ENCODE measurements at regions of chr6 and their contacts with region 1.

Region 1: GRCh38 chr6:100001915-100002388 is 7.9 kb upstream of the MCHR2 start:
- DNase-seq: peak; percentile 52
- CTCF ChIP-seq: peak; percentile 95

Region 2: DNA sequence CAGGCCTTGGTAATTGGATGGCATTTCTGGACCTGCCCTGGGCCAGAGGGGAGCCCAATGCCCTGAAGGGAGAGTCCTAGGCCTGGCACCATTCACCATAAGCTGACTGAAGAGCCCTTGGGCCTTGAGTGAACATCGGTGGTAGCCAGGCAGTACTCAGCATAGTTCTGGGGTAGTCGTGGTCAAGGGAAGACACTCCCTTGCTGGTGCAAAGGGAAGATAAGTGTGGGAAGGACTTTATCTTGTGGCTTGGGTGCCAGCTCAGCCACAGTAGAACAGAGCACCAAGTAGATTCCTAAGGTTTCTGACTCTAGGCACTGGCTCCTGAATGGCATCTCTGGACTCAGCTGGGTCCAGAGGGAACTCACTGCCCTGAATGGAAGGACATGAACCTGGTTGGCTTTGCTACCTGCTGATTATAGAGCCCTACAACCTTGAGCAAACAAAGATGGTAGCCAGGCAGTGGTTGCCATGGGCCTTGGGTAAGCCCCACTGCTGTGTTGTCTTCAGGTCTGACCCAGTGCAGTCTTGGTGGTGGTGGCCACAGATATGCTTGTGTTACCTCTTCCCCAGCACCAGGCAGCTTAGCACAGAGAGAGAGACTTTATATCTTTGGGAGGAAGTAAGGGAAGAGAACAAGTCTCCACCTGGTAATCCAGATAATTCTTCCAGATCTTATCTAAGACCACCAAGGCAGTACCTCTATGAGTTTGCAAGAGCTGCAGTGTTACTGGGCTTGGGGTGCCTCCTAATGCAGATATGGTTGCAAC is 311.9 kb before region 1 on chr6:
- CTCF ChIA-PET with region 1: no interaction called
- POLR2A ChIA-PET with region 1: no interaction called
- DNase-seq: no peak
- CTCF ChIP-seq: no peak

Region 3: GRCh38 chr6:99979953-99980352 is 22.0 kb before region 1 on chr6:
- CTCF ChIA-PET with region 1: interaction called, 11 read pairs
- POLR2A ChIA-PET with region 1: no interaction called
- DNase-seq: no peak
- CTCF ChIP-seq: no peak

Region 4: DNA sequence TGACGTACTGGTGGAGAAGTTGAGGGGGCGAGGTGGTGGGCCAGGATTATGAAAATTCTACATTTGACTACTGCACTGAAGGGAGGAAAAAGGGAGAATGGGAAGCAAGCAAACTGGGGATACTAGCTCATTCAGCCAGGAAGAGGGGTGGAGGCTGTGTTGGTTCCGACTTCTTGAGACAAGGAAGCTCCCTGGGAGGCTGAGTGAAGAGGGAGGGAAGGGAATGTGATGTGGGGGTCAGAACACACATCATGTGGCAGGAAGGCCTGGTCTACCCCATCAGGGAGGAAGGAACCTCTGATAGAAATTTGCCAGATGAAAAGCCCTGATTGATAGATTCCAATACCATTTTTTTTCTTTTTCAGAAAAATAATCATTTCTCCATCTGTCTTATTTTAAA is 20.9 kb after region 1 on chr6:
- CTCF ChIA-PET with region 1: interaction called, 14 read pairs
- POLR2A ChIA-PET with region 1: no interaction called
- DNase-seq: no peak
- CTCF ChIP-seq: no peak

Region 5: GRCh38 chr6:100078509-100078908 is 76.6 kb after region 1 on chr6:
- CTCF ChIA-PET with region 1: interaction called, 13 read pairs
- POLR2A ChIA-PET with region 1: no interaction called
- DNase-seq: no peak
- CTCF ChIP-seq: no peak

Region 6: GRCh38 chr6:100099189-100100074 is 97.5 kb after region 1 on chr6:
- CTCF ChIA-PET with region 1: interaction called, 37 read pairs
- POLR2A ChIA-PET with region 1: no interaction called
- DNase-seq: peak; percentile 22
- CTCF ChIP-seq: peak; percentile 45

Region 7: DNA sequence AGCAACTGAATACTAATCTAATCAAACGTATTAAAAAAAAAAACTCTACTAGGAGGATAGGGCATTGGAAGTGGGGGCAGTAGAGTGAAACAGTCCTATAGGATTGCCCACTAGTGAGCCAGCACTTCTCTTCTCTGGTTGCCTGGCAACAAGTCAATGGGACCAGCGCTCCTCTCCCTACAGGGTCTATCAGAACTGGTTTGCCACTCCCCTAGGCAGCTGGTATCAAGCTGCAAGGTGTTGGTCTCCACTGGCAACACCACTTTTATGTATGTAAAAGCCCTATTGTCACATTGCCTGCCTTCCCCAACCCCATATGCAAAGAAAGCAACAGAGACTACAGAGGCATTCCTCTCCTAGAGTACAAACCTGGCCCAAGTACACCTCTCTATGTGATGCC is 159.0 kb after region 1 on chr6:
- CTCF ChIA-PET with region 1: no interaction called
- POLR2A ChIA-PET with region 1: no interaction called
- DNase-seq: no peak
- CTCF ChIP-seq: no peak